ENCODE measurements at regions of chr3 and their contacts with region 1.

Region 1: DNA sequence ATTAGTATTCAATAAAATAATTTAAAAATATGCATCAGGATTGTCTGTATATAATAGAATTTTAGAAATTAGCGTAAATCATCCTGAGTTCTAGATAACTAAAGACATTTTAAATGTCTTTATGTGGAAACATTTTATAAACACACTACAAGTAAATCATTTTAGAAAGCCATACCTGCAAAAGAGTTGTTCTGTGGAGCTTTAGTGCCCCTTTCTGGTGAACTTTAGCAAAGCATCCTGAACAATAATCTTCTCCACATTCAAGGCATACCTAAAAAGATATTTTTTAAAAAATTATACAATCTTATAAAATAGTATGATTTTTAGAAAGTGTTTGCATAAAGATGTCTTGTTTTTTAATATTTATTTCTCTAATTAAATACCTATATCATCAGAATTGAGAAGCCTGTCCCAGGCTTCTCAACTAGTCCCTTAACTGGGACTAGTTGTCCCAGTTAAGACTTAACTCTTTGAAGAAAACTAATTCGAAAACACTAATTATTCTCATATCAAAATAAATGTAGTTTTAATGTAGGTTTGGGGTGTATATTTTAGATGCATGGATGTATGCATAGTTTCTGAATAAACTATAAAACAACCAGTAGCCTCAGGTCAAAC is 29.7 kb downstream of the ZBBX start:
- DNase-seq: no peak
- ATAC-seq: no peak
- H3K4me3 ChIP-seq: no peak overlapping the region
- H3K27ac ChIP-seq: no peak overlapping the region
- H3K4me1 ChIP-seq: no peaks in the 10 kb centered on the region
- H3K27me3 ChIP-seq: no peaks in the 10 kb centered on the region
- CTCF ChIP-seq: peak; percentile 27 to 74 (median 63)
- POLR2A ChIP-seq: no peak

Region 2: DNA sequence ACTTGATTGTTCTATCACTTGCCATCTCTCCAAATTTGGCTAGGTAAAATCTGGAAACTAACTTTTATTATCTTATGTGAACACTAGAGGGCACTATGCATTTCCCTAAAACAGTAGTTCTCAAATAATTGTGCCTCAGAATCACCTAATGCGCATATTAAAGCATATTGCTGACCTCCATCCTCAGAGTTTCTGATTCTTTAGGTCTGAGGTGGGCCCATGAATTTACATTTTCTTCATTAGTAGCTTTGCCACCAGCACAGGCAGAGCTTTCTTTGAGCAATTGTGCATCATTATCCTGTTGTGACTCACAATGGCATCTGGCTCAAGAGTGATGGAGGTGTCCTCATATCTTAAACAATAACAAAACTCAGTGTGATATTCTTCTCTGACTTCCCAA is 1495.7 kb before region 1 on chr3:
- intact Hi-C with region 1: loop called in 4 of 10 experiments (anchors 5 to 10 kb)
- DNase-seq: no peak
- ATAC-seq: no peak
- H3K4me3 ChIP-seq: no peak overlapping the region
- H3K27ac ChIP-seq: no peak overlapping the region
- H3K4me1 ChIP-seq: no peaks in the 10 kb centered on the region
- H3K27me3 ChIP-seq: no peaks in the 10 kb centered on the region
- CTCF ChIP-seq: peak; percentile 25 to 59 (median 45)
- POLR2A ChIP-seq: no peak

Region 3: DNA sequence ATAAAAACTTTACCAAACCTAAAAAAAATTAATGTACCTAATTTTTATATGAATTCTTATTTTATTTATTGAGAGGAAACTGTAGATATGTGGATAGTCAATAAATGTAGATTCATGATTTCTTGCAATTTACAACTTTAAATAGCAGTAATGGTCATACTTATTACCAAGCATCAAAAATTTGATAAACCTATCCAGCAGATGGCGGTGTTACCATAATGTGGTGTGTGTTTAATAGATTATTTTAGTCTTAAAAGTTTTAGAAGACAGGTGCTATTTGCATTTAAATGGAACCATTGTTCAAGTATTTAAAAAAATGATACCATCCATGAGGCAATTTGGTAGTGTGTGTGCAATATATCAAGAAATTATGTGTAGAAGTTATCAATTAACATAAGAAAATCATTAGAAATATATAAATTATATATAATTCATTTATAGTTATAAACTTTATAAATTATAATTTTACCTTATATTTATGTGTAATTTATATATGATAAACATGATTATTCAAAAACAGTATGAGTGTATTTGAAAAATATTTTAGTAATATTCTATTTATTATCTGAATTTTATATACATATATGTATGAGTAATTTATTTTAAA is 1337.2 kb before region 1 on chr3:
- intact Hi-C with region 1: loop called in 8 of 10 experiments (anchors 5 to 10 kb)
- DNase-seq: no peak
- ATAC-seq: no peak
- H3K4me3 ChIP-seq: no peak overlapping the region
- H3K27ac ChIP-seq: no peak overlapping the region
- H3K4me1 ChIP-seq: no peaks in the 10 kb centered on the region
- H3K27me3 ChIP-seq: no peaks in the 10 kb centered on the region
- CTCF ChIP-seq: peak in 7 of 12 donors; percentile 18 to 46 (median 39)
- POLR2A ChIP-seq: no peak

Region 4: GRCh38 chr3:167102071-167102470 is 248.3 kb before region 1 on chr3:
- intact Hi-C with region 1: loop called in 1 of 10 experiments (anchors 5 kb)
- DNase-seq: no peak
- ATAC-seq: no peak
- H3K4me3 ChIP-seq: no peak overlapping the region
- H3K27ac ChIP-seq: no peak overlapping the region
- H3K4me1 ChIP-seq: no peaks in the 10 kb centered on the region
- H3K27me3 ChIP-seq: no peaks in the 10 kb centered on the region
- CTCF ChIP-seq: peak in 4 of 12 donors; percentile 11 to 29 (median 19)
- POLR2A ChIP-seq: no peak

Region 5: DNA sequence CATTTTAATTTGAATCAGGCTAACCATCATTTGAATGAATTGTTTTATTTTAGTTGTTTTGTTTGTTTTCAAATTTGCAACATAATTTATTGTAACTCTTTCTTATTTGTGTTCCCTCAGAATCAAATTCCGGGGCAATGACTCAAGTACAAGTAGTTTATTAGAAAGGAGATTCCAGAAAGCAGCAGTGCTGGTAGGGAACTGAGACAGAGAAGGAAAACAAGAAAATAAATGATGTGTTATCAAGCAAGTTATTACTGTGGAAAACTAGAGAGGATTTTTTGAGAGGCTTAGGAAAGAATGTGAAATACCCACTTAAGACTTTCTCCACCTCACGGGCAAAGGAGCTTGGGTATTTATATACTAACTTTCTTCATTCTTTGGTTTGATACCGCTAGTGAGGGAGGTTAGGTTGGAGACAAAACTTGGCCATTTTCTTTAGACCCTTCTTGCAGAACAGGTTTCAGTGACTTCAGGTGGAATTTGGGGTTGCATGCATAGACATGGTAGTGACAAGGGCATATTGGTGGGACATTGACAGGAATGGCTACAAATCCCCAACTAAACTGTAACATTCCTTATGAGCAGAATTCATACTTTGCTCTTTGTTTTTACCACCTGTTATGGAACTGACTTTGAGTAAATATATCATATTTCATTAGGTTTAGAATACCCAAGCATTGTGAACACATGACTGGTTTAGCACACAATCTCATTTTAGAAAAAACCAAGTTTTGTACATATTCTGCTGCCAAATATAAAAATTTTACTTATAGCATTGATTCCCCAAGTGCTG is 224.5 kb before region 1 on chr3:
- intact Hi-C with region 1: no loop called
- DNase-seq: no peak
- ATAC-seq: no peak
- H3K4me3 ChIP-seq: no peak overlapping the region
- H3K27ac ChIP-seq: no peak overlapping the region
- H3K4me1 ChIP-seq: no peaks in the 10 kb centered on the region
- H3K27me3 ChIP-seq: no peaks in the 10 kb centered on the region
- CTCF ChIP-seq: no peak
- POLR2A ChIP-seq: no peak

Region 6: DNA sequence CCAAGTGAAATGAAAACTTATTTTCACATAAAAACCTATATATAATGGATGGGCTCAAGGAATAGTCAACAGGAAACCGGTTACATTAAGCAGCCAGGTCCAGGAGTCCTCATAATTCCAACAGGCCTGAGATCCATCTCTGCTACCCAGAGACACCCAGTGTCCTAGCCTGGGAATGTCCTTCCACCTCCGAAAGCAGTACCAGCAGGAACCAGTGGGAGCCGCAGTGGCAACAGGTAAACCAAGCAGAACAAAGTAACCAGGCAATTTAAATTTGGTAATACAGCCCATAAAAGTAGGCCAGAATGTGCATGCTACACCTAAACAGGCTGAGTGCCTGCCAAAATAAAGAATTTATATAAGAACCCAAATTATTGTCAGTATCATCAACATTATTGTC is 165.8 kb before region 1 on chr3:
- intact Hi-C with region 1: no loop called
- DNase-seq: no peak
- ATAC-seq: no peak
- H3K4me3 ChIP-seq: no peak overlapping the region
- H3K27ac ChIP-seq: no peak overlapping the region
- H3K4me1 ChIP-seq: no peaks in the 10 kb centered on the region
- H3K27me3 ChIP-seq: no peaks in the 10 kb centered on the region
- CTCF ChIP-seq: no peak
- POLR2A ChIP-seq: no peak

Region 7: DNA sequence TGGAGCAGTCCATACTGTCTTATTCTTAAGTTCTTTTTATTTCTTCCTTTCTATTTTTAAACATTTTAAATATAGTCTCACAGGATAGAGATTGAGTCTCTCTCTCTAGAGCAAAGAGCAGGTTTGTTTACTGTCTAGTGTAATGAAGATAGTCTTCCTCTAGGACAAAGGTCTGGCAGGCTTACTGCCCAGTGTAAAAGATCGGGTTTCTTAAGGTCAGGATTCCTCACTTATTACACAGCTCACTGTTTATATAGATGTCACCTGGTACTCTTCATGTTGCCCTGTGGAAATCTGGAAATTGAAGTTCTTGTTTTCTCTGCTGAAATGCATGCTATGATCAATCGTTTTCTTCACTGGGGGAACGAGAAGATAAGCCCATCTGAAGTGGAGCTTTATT is 46.3 kb before region 1 on chr3:
- intact Hi-C with region 1: no loop called
- DNase-seq: peak in 4 of 5 donors; percentile 28 to 41 (median 35)
- ATAC-seq: peak; percentile 100
- H3K4me3 ChIP-seq: no peak overlapping the region
- H3K27ac ChIP-seq: peak overlapping the region in 9 of 12 donors; percentile 2 to 73 (median 32)
- H3K4me1 ChIP-seq: peaks cover 0 to 12% (median 2%) of the 10 kb centered on the region in 12 donors
- H3K27me3 ChIP-seq: no peaks in the 10 kb centered on the region
- CTCF ChIP-seq: no peak
- POLR2A ChIP-seq: no peak

Region 8: GRCh38 chr3:167318306-167318705 is 32.0 kb before region 1 on chr3:
- intact Hi-C with region 1: no loop called
- DNase-seq: no peak
- ATAC-seq: no peak
- H3K4me3 ChIP-seq: no peak overlapping the region
- H3K27ac ChIP-seq: no peak overlapping the region
- H3K4me1 ChIP-seq: no peaks in the 10 kb centered on the region
- H3K27me3 ChIP-seq: no peaks in the 10 kb centered on the region
- CTCF ChIP-seq: no peak
- POLR2A ChIP-seq: no peak